WTC11 (cell line): ENCODE measurements at regions of chr12 and their contacts with region 1.

Region 1: DNA sequence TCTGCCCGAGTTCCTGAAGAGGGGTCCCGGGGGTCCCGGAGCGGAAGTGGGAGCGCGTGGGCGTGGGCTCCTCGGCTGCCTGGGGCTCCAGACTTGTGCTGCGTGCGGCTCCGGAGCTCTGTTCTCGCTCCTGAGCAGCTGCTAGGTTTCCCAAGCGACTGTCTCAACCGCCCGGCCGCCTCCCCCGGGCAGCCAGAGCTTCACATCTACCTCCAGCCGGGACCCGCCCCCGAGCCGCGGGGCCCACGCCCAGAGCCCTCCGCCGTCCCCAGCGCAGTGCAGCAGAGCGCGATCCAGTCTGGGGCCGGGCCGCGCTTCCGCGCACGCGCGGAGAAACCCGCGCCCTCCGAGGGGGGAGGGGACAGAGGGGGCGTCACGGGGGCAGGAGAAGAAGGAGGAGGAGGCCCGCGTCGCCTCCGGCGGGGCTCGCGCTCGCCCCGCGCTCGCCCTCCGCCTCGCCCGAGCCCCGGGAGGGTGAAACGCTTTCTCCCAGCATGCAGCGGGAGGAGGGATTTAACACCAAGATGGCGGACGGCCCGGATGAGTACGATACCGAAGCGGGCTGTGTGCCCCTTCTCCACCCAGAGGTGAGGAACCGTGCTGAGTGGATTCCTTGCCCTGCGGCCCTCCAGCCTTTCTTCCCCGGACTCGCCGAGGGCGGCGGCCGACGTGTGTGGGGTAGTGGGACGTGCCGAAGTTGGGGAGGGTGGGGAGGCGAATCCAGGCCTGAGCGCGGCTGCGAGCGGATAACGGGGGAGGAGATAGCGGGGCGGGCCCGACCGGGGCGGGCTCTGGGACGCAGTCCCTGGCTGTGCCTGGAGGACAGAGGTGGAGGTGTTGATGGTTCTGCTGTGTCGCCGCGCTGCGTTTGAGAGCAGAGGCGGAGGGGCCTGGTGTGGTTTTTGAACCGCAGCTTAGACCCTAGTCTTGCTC is at the start of gene ZDHHC17:
- DNase-seq: peak; percentile 91
- ATAC-seq: peak; percentile 87
- H3K4me3 Mint-ChIP-seq: peak within 1 kb of the TSS; percentile 97
- H3K27ac Mint-ChIP-seq: peak within 1 kb of the TSS; percentile 99
- H3K4me1 Mint-ChIP-seq: peaks cover 38% of the 10 kb centered on the region
- H3K27me3 Mint-ChIP-seq: no peaks in the 10 kb centered on the region; the same call in 1 of the 2 replicates
- CTCF ChIP-seq: no peak
- total RNA-seq, gene ZDHHC17: 30.7 to 36.9 TPM (median 30.7 TPM) in 3 replicates

Region 2: DNA sequence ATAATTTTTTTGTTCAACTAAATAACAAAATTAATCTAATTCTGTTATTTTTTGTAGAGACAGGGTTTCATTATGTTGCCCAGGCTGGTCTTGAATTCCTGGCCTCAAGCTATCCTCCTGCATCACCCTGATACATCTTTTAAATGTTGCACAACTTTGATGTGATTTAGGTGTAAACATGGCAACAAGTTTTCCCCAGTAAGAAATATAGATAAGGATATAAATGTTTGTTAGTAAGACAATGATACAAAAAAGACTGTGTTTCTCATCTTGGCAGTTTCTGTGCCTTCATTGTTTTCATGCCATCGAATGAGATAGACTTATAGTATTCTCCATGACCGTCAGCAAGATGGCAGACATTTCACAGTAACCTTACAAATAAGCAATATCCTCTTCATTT is 159.9 kb before region 1 on chr12:
- CTCF ChIA-PET with region 1: no interaction called
- POLR2A ChIA-PET with region 1: no interaction called
- DNase-seq: no peak
- ATAC-seq: no peak
- H3K4me3 Mint-ChIP-seq: no peak overlapping the region
- H3K27ac Mint-ChIP-seq: no peak overlapping the region
- H3K4me1 Mint-ChIP-seq: peaks cover 8% of the 10 kb centered on the region
- H3K27me3 Mint-ChIP-seq: no peaks in the 10 kb centered on the region; the same call in 1 of the 2 replicates
- CTCF ChIP-seq: no peak

Region 3: GRCh38 chr12:76747246-76747645 is 16.8 kb before region 1 on chr12:
- CTCF ChIA-PET with region 1: no interaction called
- POLR2A ChIA-PET with region 1: interaction called, 11 read pairs
- DNase-seq: no peak
- ATAC-seq: no peak
- H3K4me3 Mint-ChIP-seq: no peak overlapping the region
- H3K27ac Mint-ChIP-seq: no peak overlapping the region
- H3K4me1 Mint-ChIP-seq: no peaks in the 10 kb centered on the region; the same call in 1 of the 2 replicates
- H3K27me3 Mint-ChIP-seq: peaks cover 3% of the 10 kb centered on the region; the same call in 1 of the 2 replicates
- CTCF ChIP-seq: no peak

Region 4: GRCh38 chr12:76777765-76778216 is 13.8 kb after region 1 on chr12:
- CTCF ChIA-PET with region 1: interaction called, 5 read pairs
- POLR2A ChIA-PET with region 1: interaction called, 10 read pairs
- DNase-seq: no peak
- ATAC-seq: peak; percentile 19; the same call in 1 of the 2 replicates
- H3K4me3 Mint-ChIP-seq: no peak overlapping the region
- H3K27ac Mint-ChIP-seq: peak overlapping the region; percentile 35
- H3K4me1 Mint-ChIP-seq: peaks cover 56% of the 10 kb centered on the region
- H3K27me3 Mint-ChIP-seq: no peaks in the 10 kb centered on the region
- CTCF ChIP-seq: no peak

Region 5: GRCh38 chr12:76790564-76791552 is 26.8 kb after region 1 on chr12:
- CTCF ChIA-PET with region 1: no interaction called
- POLR2A ChIA-PET with region 1: no interaction called
- DNase-seq: no peak
- ATAC-seq: no peak
- H3K4me3 Mint-ChIP-seq: no peak overlapping the region
- H3K27ac Mint-ChIP-seq: no peak overlapping the region
- H3K4me1 Mint-ChIP-seq: peaks cover 14% of the 10 kb centered on the region
- H3K27me3 Mint-ChIP-seq: no peaks in the 10 kb centered on the region
- CTCF ChIP-seq: peak; percentile 48